ENCODE measurements at regions of chr12 and their contacts with region 1.

Region 1: DNA sequence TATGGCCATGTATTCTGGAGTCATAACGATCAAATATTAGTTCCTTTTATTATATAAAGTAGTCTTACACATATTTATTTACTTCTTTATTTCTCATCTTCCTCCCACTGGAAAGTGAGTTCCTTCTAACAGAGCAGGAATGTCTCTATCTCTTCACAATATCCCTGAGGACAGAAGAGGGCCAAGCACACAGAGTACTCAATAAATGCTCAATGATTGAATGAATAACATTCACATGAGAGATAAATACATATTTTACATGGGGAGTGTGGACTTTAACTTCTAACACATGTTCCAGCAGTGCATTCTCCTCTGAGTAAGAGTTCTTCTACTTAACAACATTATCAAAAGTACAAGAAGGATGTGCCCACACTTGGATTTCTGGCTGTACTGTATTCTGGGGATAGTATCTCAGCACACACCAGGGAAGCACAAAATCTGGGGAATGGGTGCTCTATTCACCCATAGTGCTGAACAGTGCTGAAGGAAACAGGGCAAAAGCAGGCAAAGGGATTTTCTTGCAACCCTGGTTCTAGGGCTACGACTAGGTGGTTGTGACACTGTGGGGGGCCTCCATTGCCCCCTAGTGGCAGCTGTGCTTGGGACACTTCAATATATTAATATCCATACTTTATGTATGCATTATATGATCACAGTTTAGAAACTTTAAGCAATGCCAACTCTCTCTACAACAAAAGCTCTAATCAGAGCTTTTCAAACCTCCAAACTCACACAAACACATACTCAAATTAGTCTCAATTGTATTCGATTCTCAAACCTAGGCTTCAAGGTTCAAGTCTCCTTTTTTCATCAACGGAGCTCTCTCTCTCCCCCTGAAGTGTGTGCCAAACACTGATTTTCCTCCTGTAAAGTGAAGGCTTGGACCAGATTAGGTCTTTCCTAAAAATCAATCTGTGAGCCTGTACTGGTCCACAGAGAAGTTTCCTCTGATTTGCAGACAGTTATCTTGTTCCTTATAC is 115.5 kb downstream of the SLC2A13 start:
- DNase-seq: peak; percentile 82
- ATAC-seq: peak; percentile 91
- H3K4me3 Mint-ChIP-seq: no peak overlapping the region
- H3K27ac Mint-ChIP-seq: no peak overlapping the region
- H3K4me1 Mint-ChIP-seq: no peaks in the 10 kb centered on the region
- H3K27me3 Mint-ChIP-seq: no peaks in the 10 kb centered on the region
- CTCF ChIP-seq: peak; percentile 92

Region 2: DNA sequence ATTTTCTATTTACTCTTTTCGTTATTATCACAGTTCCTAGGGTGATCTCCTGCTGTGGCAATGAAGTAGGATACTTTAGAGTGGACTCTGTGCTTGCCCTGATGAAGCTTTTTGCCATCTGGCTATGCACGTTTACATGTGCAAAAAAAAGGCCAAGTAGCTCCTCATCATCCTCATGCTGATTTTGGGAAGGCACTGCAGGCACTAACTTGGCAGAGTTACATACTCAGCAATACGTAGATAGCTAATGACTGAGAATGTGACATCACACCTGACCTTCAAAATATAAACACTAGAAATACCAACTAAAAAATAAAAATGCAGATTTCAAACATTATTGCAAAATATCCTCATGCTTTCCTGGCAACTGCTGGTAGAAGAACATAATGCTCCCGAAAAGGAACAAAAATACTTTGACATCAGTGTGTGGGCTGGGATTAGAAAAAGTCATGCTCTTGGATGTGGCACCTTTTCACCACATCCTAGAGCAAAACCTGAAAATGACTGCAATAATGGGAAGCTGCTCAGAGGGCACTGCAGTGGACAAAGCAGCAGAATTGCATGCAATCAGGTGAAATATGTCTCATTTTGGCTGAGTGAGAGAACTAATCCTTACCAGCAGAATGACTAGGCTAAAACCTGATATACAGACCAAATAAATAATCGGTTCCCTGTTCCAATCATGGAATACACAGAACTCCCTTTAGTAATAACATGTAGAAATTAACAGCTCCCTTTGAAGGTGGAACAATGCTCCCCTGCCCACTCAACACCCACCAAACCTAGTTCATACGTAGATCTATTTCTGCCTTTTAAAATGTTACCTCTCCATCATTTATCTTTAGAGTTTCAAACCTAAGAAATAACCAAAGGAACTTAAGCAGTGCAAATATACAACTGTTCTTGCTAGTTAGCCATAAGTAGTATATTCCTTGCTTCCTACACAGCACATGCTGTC is 217.4 kb before region 1 on chr12:
- CTCF ChIA-PET with region 1: interaction called, 3 read pairs
- POLR2A ChIA-PET with region 1: no interaction called
- intact Hi-C with region 1: loop called (anchors 10 kb)
- DNase-seq: no peak
- ATAC-seq: no peak
- H3K4me3 Mint-ChIP-seq: no peak overlapping the region
- H3K27ac Mint-ChIP-seq: no peak overlapping the region
- H3K4me1 Mint-ChIP-seq: no peaks in the 10 kb centered on the region
- H3K27me3 Mint-ChIP-seq: no peaks in the 10 kb centered on the region
- CTCF ChIP-seq: no peak

Region 3: GRCh38 chr12:40001406-40001805 is 11.0 kb after region 1 on chr12:
- CTCF ChIA-PET with region 1: interaction called, 11 read pairs
- POLR2A ChIA-PET with region 1: no interaction called
- intact Hi-C with region 1: no loop called
- DNase-seq: no peak
- ATAC-seq: no peak
- H3K4me3 Mint-ChIP-seq: no peak overlapping the region
- H3K27ac Mint-ChIP-seq: no peak overlapping the region
- H3K4me1 Mint-ChIP-seq: no peaks in the 10 kb centered on the region
- H3K27me3 Mint-ChIP-seq: no peaks in the 10 kb centered on the region
- CTCF ChIP-seq: no peak